MCF 10A (cell line): ENCODE measurements at regions of chr9 and their contacts with region 1.

Region 1: DNA sequence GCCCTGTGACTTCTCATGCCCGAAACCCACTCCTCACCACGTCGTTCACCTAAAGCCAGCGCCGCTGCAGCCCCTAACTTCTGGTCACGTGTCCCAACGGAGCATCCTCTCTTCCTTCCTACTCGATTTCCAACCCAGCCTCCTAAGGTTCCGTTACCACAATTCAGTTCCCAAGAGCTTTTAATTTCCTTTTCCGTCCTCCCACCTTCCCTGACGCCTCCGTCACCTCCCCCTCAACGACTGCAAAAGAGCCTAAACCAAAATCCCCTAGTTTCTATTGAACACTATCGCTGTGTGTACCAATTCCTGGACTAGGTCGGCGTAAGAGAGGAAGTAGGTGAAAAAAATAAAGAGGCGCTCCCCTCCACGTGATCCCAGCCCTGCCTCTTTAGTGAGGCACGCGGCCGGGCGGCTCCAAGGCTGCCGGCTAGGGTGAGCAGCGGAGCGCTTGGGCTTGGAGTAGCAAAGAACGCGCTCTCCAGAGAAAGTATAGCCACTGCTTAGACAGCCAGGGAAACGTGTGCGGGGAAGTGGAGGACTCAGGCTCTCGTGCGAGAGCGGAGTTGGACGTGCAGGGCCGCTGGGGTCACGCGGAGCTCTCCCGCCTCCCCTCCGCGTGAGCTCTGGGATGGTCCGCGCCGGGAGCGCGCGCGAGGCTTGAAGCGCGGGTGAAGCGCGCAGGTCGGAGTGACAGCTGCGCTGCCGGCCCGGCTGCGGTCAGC is at the starts of genes CENPP and NOL8:
- DNase-seq: peak; percentile 92
- H3K4me3 Mint-ChIP-seq: peak within 1 kb of the TSS; percentile 97
- H3K27ac Mint-ChIP-seq: peak within 1 kb of the TSS; percentile 98
- H3K4me1 Mint-ChIP-seq: peaks cover 26% of the 10 kb centered on the region
- H3K27me3 Mint-ChIP-seq: no peaks in the 10 kb centered on the region
- CTCF ChIP-seq: no peak
- total RNA-seq, gene CENPP: 1.5 and 4.2 TPM in 2 replicates
- total RNA-seq, gene NOL8: 38.7 and 41.8 TPM in 2 replicates

Region 2: DNA sequence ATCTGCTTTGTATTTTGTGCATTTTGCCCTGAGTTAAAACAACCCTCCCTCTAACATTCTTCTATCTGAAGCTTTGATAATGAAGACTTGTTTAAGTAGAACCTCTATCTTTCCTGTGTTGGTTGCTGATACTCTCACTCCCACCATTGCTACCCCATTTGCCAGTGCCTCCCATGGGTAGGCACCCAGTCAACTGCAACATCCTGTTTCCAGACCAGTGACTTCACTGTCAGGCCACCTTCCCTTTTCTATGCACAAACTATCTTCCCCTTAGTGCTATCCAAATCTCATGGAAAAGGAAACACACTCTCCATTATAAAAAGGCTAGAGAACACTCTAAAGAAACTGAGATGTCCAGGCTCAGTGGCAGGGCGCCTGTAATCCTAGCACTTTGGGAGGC is 26.3 kb before region 1 on chr9:
- CTCF ChIA-PET with region 1: no interaction called
- POLR2A ChIA-PET with region 1: interaction called, 27 read pairs
- intact Hi-C with region 1: no loop called
- DNase-seq: no peak
- H3K4me3 Mint-ChIP-seq: no peak overlapping the region
- H3K27ac Mint-ChIP-seq: peak overlapping the region; percentile 52
- H3K4me1 Mint-ChIP-seq: peaks cover 10% of the 10 kb centered on the region
- H3K27me3 Mint-ChIP-seq: no peaks in the 10 kb centered on the region
- CTCF ChIP-seq: no peak

Region 3: DNA sequence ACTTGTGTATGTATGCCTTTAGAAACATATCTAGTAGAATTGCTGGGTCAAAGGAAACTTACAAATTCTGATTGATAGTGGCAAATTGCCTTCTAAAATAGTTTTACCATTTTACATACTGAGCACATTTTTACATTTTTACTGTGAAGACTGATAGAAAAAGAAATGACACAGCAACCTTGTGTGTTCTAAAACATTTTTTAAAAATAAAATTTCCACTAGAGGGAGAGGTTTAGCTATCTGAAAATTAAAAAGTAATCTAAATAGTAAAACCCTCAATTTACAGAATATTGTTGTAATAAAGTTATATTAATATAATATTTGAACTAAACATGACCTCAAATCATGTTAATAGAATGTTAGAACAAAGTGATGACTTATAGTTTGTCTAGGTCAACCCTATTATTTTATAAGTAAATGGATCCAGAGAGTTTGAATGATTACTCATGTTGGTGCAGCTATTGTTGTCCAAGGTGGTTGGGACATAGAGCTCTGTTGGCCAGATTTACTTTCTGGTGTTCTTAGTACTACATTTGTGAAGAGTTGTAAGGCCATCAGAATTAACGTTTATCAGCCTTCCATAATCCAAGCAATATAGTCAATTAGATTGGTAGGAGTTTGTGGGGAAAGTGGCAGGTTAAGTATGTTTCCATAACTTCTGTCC is 17.5 kb after region 1 on chr9:
- CTCF ChIA-PET with region 1: interaction called, 5 read pairs
- POLR2A ChIA-PET with region 1: interaction called, 11 read pairs
- intact Hi-C with region 1: no loop called
- DNase-seq: no peak
- H3K4me3 Mint-ChIP-seq: no peak overlapping the region
- H3K27ac Mint-ChIP-seq: peak overlapping the region; percentile 48
- H3K4me1 Mint-ChIP-seq: no peaks in the 10 kb centered on the region
- H3K27me3 Mint-ChIP-seq: no peaks in the 10 kb centered on the region
- CTCF ChIP-seq: peak; percentile 32

Region 4: DNA sequence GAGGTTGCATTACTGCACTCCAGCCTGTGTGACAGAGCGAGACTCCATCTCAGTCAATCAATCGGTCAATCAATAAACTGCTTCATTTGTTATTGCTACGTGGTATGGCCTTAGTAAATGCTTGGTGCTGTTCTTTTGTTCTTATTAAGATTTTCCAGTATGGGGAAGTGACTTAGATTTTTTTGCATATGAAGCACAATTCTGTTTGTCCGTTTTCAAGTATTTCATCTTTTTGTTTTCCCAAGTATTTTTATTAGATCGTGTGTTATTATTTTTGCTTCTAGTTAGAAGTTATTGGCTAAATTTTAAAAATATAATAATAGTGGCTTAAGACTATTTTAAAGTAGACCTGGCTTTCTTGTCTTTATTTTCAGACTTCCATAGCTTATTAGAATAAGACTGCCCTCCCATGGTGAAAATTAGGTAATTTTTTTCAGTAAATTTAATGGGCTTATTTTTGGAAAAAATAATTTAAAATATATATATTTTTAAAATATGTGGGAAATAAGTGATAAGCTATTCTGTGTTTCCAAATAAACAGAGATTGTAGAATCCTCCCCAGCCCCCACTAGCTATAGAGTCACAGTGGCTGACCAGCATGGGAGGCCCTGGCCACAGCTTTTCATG is 113.6 kb after region 1 on chr9:
- CTCF ChIA-PET with region 1: interaction called, 9 read pairs
- POLR2A ChIA-PET with region 1: interaction called, 25 read pairs
- intact Hi-C with region 1: loop called (anchors 1 kb)
- DNase-seq: peak; percentile 9
- H3K4me3 Mint-ChIP-seq: no peak overlapping the region
- H3K27ac Mint-ChIP-seq: peak overlapping the region; percentile 68
- H3K4me1 Mint-ChIP-seq: peaks cover 7% of the 10 kb centered on the region
- H3K27me3 Mint-ChIP-seq: no peaks in the 10 kb centered on the region
- CTCF ChIP-seq: peak; percentile 50

Region 5: GRCh38 chr9:92634712-92635605 is 309.5 kb after region 1 on chr9:
- CTCF ChIA-PET with region 1: interaction called, 46 read pairs
- POLR2A ChIA-PET with region 1: interaction called, 5 read pairs
- intact Hi-C with region 1: loop called (anchors 1 kb)
- DNase-seq: peak; percentile 67
- H3K4me3 Mint-ChIP-seq: no peak overlapping the region
- H3K27ac Mint-ChIP-seq: no peak overlapping the region
- H3K4me1 Mint-ChIP-seq: no peaks in the 10 kb centered on the region
- H3K27me3 Mint-ChIP-seq: no peaks in the 10 kb centered on the region
- CTCF ChIP-seq: peak; percentile 90

Region 6: GRCh38 chr9:92669890-92670708 is 344.7 kb after region 1 on chr9 and contains the start of gene IPPK:
- CTCF ChIA-PET with region 1: interaction called, 4 read pairs
- POLR2A ChIA-PET with region 1: interaction called, 33 read pairs
- intact Hi-C with region 1: no loop called
- DNase-seq: peak; percentile 99
- H3K4me3 Mint-ChIP-seq: peak within 1 kb of the TSS; percentile 74
- H3K27ac Mint-ChIP-seq: peak within 1 kb of the TSS; percentile 69
- H3K4me1 Mint-ChIP-seq: peaks cover 10% of the 10 kb centered on the region
- H3K27me3 Mint-ChIP-seq: no peaks in the 10 kb centered on the region
- CTCF ChIP-seq: no peak
- total RNA-seq, gene IPPK: 16.3 and 16.6 TPM in 2 replicates